ENCODE measurements at regions of chrX and their contacts with region 1.

Region 1: DNA sequence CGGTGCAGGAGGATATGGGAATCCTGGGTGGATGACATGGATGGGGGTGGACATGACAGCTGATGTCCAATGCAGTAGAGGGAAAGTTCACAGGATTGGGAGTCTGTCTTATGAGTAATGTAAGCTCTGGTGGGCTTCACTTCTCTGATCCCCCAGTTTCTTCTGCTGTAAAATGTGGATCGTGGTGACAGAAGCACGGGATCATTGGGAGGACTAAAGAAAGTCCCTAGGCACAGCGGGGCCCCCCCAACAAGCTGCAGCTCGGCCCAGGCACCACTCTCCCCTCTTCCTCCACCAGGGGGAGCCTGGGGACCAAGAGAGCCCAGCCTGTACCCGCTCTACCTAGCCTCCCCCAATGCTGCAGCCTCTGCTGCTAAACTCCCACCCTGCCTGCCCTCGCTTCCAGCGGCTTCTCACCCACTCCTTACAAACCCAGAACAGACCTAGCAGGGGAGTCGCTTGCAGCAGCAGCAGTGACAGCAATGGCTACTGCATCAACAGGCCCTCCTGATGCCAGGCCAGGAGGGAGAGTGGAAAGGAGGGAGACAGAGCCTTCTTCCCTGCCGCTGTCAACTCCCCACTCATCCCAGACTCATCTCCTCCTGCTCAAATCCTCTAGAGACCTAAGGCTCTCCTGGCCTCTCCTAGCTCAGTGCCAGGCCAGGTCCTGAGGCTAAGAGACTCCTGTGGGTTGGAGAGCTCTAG is 36.1 kb upstream of the IQSEC2 start:
- DNase-seq: peak; percentile 77
- ATAC-seq: peak; percentile 64
- H3K4me3 Mint-ChIP-seq: peak overlapping the region; percentile 92
- H3K27ac Mint-ChIP-seq: no peak overlapping the region
- H3K4me1 Mint-ChIP-seq: peaks cover 57% of the 10 kb centered on the region
- H3K27me3 Mint-ChIP-seq: peaks cover 15% of the 10 kb centered on the region
- CTCF ChIP-seq: peak; percentile 56

Region 2: DNA sequence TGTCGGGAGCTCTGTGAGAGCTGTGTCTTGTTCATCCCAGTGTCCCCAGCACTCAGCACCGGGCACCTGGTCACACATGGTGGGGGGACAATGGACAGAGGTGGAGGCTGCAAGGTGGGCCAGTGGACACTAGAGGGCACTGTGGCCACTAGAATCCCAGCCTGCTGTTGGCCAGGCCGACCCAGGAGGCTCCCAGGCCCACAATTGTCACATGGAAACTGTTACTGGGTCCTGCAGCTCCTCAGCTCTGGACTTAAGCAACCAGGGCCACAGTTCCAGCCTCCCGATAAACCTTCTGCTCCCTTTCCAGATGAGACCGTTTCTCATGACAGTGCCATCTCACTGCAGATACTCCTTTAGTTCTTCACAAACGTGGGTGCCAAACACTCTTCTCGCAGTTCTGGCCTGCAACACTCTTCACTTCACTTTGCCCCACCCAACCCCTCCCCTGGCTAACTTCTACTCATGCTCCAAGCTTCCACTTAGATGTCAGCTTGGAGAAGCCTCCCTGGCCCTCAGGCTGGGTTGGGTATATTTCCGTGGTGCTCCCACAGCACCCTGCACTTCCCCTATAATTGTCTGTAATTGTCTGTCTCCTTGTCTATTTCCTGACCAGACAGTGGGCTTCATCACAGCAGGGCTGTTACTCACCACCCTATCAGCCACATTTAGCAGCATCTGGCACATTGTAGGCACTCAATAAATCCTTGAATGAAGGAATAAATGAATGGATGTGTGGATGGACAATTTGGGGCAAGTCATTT is 32.7 kb before region 1 on chrX:
- CTCF ChIA-PET with region 1: interaction called, 40 read pairs
- POLR2A ChIA-PET with region 1: no interaction called
- DNase-seq: peak; percentile 69
- ATAC-seq: peak; percentile 66
- H3K4me3 Mint-ChIP-seq: no peak overlapping the region
- H3K27ac Mint-ChIP-seq: no peak overlapping the region
- H3K4me1 Mint-ChIP-seq: peaks cover 38% of the 10 kb centered on the region
- H3K27me3 Mint-ChIP-seq: no peaks in the 10 kb centered on the region
- CTCF ChIP-seq: peak; percentile 58

Region 3: DNA sequence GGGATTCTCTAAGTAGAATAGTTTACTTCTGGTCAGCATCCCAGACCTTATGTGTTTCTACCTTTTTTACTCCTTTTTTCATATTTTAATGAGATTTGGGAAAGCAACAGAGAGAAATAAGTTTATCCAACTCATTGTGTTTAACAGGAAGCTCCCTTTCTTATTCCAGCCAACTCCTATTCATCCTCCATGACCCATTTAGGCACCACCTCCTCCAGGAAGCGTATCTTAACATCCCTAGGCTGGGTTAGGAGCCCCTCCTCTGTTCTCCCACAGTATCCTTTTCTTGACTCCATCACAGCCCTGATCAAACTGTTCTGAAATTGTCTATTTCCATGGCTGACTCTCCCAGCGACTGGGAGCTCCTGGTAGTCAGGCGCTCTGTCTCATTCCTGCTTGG is 17.4 kb before region 1 on chrX:
- CTCF ChIA-PET with region 1: interaction called, 20 read pairs
- POLR2A ChIA-PET with region 1: no interaction called
- DNase-seq: no peak
- ATAC-seq: no peak; the same call in 1 of the 2 replicates
- H3K4me3 Mint-ChIP-seq: no peak overlapping the region
- H3K27ac Mint-ChIP-seq: no peak overlapping the region
- H3K4me1 Mint-ChIP-seq: peaks cover 19% of the 10 kb centered on the region
- H3K27me3 Mint-ChIP-seq: no peaks in the 10 kb centered on the region
- CTCF ChIP-seq: no peak

Region 4: GRCh38 chrX:53374222-53374820 is 56.8 kb after region 1 on chrX:
- CTCF ChIA-PET with region 1: interaction called, 15 read pairs
- POLR2A ChIA-PET with region 1: no interaction called
- DNase-seq: no peak
- ATAC-seq: no peak
- H3K4me3 Mint-ChIP-seq: no peak overlapping the region
- H3K27ac Mint-ChIP-seq: no peak overlapping the region
- H3K4me1 Mint-ChIP-seq: no peaks in the 10 kb centered on the region
- H3K27me3 Mint-ChIP-seq: no peaks in the 10 kb centered on the region; the same call in 1 of the 2 replicates
- CTCF ChIP-seq: no peak

Region 5: GRCh38 chrX:53433651-53434639 is 116.4 kb after region 1 on chrX and contains the start of gene HSD17B10:
- CTCF ChIA-PET with region 1: interaction called, 28 read pairs
- POLR2A ChIA-PET with region 1: interaction called, 3 read pairs
- DNase-seq: peak; percentile 90
- ATAC-seq: peak; percentile 96
- H3K4me3 Mint-ChIP-seq: peak within 1 kb of the TSS; percentile 98
- H3K27ac Mint-ChIP-seq: peak within 1 kb of the TSS; percentile 95
- H3K4me1 Mint-ChIP-seq: peaks cover 5% of the 10 kb centered on the region
- H3K27me3 Mint-ChIP-seq: peaks cover 9% of the 10 kb centered on the region; the same call in 1 of the 2 replicates
- CTCF ChIP-seq: no peak
- total RNA-seq, gene HSD17B10: 101 to 108 TPM (median 106 TPM) in 3 replicates

Region 6: GRCh38 chrX:53481816-53482465 is 164.4 kb after region 1 on chrX:
- CTCF ChIA-PET with region 1: interaction called, 42 read pairs
- POLR2A ChIA-PET with region 1: interaction called, 3 read pairs
- DNase-seq: peak; percentile 57
- ATAC-seq: peak; percentile 54
- H3K4me3 Mint-ChIP-seq: no peak overlapping the region
- H3K27ac Mint-ChIP-seq: no peak overlapping the region
- H3K4me1 Mint-ChIP-seq: peaks cover 5% of the 10 kb centered on the region; the same call in 1 of the 2 replicates
- H3K27me3 Mint-ChIP-seq: 0 out of 2 replicates have a peak, but pooled peaks cover 2% of the 10 kb centered on the region
- CTCF ChIP-seq: 0 out of 2 replicates have a peak, but pooled peaks have one; percentile 17